SK-MEL-5 (cell line): ENCODE measurements at regions of chr14 and their contacts with region 1.

Region 1: DNA sequence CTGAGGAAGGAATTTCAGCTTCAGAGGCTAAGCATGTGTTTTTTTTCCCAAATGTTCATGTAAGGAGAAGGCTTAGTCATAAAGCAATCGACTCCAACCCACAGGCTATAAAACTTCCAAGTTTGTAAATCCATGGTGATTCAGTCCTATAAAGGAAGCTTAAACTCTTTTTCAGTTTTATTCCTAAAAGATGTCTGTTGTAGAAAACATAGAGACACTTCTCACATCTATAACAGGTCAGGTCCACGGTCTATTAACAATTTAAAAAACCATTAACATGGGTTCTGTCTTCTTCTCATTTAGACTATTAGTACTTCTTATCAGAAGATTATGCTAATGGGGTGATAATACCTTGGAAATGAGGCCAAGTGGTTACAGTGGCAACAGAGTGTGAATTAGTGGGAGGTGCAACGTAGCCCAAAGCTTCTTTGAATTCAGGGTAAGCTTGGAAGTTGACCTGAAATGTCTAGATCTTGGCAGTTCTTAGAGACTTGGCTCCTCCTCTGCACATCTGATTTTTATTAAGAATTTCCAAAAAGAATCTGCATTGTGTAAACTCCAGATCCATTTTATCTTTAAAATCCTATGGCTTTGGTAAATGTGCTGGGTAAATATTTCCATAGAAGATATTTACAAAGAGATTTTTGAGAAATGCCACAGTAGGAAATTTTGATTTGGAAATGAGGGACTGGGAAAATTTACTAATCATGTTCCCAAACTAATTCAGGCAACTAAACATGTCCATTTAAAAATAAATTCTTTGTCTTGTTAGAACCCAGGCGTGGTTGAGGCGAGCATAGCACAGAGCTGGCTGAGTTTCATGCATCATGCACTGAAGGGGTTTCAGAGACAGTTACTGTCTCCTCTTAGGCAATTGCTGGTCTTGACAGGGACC is 86.4 kb downstream of the EML1 start:
- DNase-seq: no peak

Region 2: GRCh38 chr14:99698642-99699041 is 181.0 kb before region 1 on chr14:
- in situ Hi-C with region 1: no loop called
- DNase-seq: no peak

Region 3: GRCh38 chr14:99729991-99730868 is 149.4 kb before region 1 on chr14:
- in situ Hi-C with region 1: loop called (anchors 10 kb)
- DNase-seq: peak; percentile 55